ENCODE measurements at regions of chr11 and their contacts with region 1.

Region 1: DNA sequence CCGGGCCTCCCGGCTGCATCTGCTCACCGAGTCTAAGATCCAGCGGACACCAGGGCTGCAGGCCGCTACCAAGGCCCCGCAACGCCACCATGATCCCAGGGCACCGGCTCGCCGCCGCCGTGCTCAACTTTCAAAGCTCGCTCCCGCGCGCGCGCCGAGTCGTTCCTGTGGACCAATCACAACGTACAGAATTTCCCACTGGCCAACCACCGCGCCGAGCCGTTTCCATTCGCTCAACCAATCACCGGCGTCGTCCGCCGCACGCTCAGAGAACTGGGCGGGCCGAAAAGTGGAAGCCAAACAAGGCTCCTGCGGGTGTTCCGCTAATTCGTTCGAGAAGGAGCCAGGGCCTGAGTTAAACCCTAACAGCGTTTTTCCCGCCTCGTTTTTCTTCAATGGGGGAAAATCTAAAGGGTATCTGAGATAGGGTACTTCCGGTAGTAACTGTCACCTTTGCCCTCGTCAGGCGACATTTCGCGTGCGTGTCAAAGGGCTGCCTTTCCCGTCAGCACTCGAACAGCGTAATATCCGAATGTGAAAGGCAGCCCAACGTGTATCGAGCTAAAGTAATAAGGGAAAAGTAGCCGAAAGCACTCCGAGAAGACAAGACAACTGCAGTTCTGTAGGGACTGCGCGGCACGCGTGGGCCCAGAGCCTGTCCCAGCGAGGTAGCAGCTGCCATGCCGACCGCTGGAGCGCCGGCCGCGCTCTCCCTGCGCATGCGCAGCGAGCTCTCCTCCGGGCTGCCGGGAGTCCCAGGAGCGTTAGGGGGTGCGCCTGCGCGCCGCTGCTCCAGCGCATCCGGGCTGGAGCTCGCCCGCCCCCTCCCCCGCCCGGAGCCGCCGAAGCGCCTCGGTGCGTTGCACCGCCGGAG is at the starts of genes NCAPD3 and VPS26B:
- DNase-seq: peak; percentile 92 to 99 (median 94)
- ATAC-seq: peak; percentile 80
- H3K4me3 ChIP-seq: peak within 1 kb of the TSS; percentile 84
- H3K4me3 Mint-ChIP-seq: peak within 1 kb of the TSS; percentile 98
- H3K27ac ChIP-seq: peak within 1 kb of the TSS; percentile 88 to 96
- H3K27ac Mint-ChIP-seq: peak within 1 kb of the TSS; percentile 99
- H3K4me1 ChIP-seq: peaks cover 43% of the 10 kb centered on the region
- H3K4me1 Mint-ChIP-seq: peaks cover 69% of the 10 kb centered on the region
- H3K27me3 ChIP-seq: no peaks in the 10 kb centered on the region
- H3K27me3 Mint-ChIP-seq: peaks cover 4% of the 10 kb centered on the region
- CTCF ChIP-seq: no peak
- total RNA-seq, gene NCAPD3: 25.7 to 29.6 TPM
- total RNA-seq, gene VPS26B: 41.6 to 42.2 TPM

Region 2: GRCh38 chr11:133956650-133957633 is 267.1 kb before region 1 on chr11 and contains the start of gene IGSF9B:
- CTCF ChIA-PET with region 1: no interaction called
- POLR2A ChIA-PET with region 1: no interaction called
- intact Hi-C with region 1: loop called (anchors 5 to 10 kb)
- DNase-seq: peak; percentile 82 to 94 (median 90)
- ATAC-seq: peak; percentile 91
- H3K4me3 ChIP-seq: peak within 1 kb of the TSS; percentile 93
- H3K4me3 Mint-ChIP-seq: peak within 1 kb of the TSS; percentile 87
- H3K27ac ChIP-seq: peak within 1 kb of the TSS in 1 of 2 donors; percentile 41
- H3K27ac Mint-ChIP-seq: peak within 1 kb of the TSS; percentile 77
- H3K4me1 ChIP-seq: peaks cover 46% of the 10 kb centered on the region
- H3K4me1 Mint-ChIP-seq: peaks cover 46% of the 10 kb centered on the region
- H3K27me3 ChIP-seq: peaks cover 15 to 16% of the 10 kb centered on the region in 2 experiments
- H3K27me3 Mint-ChIP-seq: peaks cover 20% of the 10 kb centered on the region
- CTCF ChIP-seq: no peak
- total RNA-seq, gene IGSF9B: 24.3 to 27.4 TPM

Region 3: DNA sequence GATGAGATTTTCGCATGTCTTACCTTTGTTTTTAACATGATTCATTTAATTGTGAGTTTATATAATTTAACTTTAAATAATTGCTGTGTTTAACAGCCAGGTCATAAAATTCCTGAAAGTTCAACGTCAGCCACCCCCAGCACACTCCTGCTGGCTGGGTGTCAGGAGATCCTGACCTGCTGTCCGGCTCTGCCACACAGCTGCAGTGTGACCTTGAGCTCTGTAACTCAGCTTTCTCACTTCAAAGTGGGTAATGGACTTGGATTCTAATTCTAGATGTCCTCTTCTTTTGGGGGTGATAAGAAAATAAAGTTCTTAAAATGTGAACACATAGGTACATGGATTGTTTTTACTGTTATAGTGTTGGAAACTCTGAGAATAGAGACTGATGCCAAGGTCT is 11.3 kb after region 1 on chr11:
- CTCF ChIA-PET with region 1: no interaction called
- POLR2A ChIA-PET with region 1: interaction called, 17 read pairs
- intact Hi-C with region 1: no loop called
- DNase-seq: no peak
- ATAC-seq: no peak
- H3K4me3 ChIP-seq: no peak overlapping the region
- H3K4me3 Mint-ChIP-seq: no peak overlapping the region
- H3K27ac ChIP-seq: no peak overlapping the region
- H3K27ac Mint-ChIP-seq: no peak overlapping the region
- H3K4me1 ChIP-seq: peaks cover 20% of the 10 kb centered on the region
- H3K4me1 Mint-ChIP-seq: peaks cover 20% of the 10 kb centered on the region
- H3K27me3 ChIP-seq: no peaks in the 10 kb centered on the region
- H3K27me3 Mint-ChIP-seq: no peaks in the 10 kb centered on the region
- CTCF ChIP-seq: no peak

Region 4: GRCh38 chr11:134253188-134253993 is 29.3 kb after region 1 on chr11 and contains the starts of genes ACAD8 and THYN1:
- CTCF ChIA-PET with region 1: interaction called, 4 read pairs
- POLR2A ChIA-PET with region 1: interaction called, 94 read pairs
- intact Hi-C with region 1: loop called (anchors 1 to 2 kb)
- DNase-seq: peak; percentile 90 to 98 (median 94)
- ATAC-seq: peak; percentile 99
- H3K4me3 ChIP-seq: peak within 1 kb of the TSS; percentile 84
- H3K4me3 Mint-ChIP-seq: peak within 1 kb of the TSS; percentile 94
- H3K27ac ChIP-seq: peak within 1 kb of the TSS in 1 of 2 donors; percentile 51
- H3K27ac Mint-ChIP-seq: peak within 1 kb of the TSS; percentile 69
- H3K4me1 ChIP-seq: peaks cover 19% of the 10 kb centered on the region
- H3K4me1 Mint-ChIP-seq: peaks cover 40% of the 10 kb centered on the region
- H3K27me3 ChIP-seq: no peaks in the 10 kb centered on the region
- H3K27me3 Mint-ChIP-seq: no peaks in the 10 kb centered on the region
- CTCF ChIP-seq: peak; percentile 36
- total RNA-seq, gene ACAD8: 15.0 to 16.3 TPM
- total RNA-seq, gene THYN1: 25.7 to 26.0 TPM

Region 5: GRCh38 chr11:134331354-134332188 is 107.5 kb after region 1 on chr11 and contains the start of gene GLB1L2:
- CTCF ChIA-PET with region 1: no interaction called
- POLR2A ChIA-PET with region 1: no interaction called
- intact Hi-C with region 1: loop called in 1 of 2 experiments (anchors 2 kb)
- DNase-seq: peak; percentile 65 to 93 (median 77)
- ATAC-seq: peak; percentile 91
- H3K4me3 ChIP-seq: peak within 1 kb of the TSS; percentile 80
- H3K4me3 Mint-ChIP-seq: peak within 1 kb of the TSS; percentile 93
- H3K27ac ChIP-seq: no peak within 1 kb of the TSS
- H3K27ac Mint-ChIP-seq: no peak within 1 kb of the TSS
- H3K4me1 ChIP-seq: peaks cover 22% of the 10 kb centered on the region
- H3K4me1 Mint-ChIP-seq: peaks cover 19% of the 10 kb centered on the region
- H3K27me3 ChIP-seq: peaks cover 0 to 4% of the 10 kb centered on the region in 2 experiments
- H3K27me3 Mint-ChIP-seq: peaks cover 36% of the 10 kb centered on the region
- CTCF ChIP-seq: no peak
- total RNA-seq, gene GLB1L2: 0.59 to 0.63 TPM